Adrenal gland (tissue), 19 donors: ENCODE measurements at regions of chr17 and their contacts with region 1.

Region 1: GRCh38 chr17:59440784-59441441 is 109.5 kb downstream of the YPEL2 start:
- DNase-seq: peak; percentile 89 to 98 (median 93)
- H3K4me3 ChIP-seq: peak overlapping the region in 1 of 4 donors; percentile 3
- H3K27ac ChIP-seq: peak overlapping the region in 2 of 5 donors; percentile 24 to 60
- H3K4me1 ChIP-seq: peaks cover 6 to 7% of the 10 kb centered on the region in 2 donors
- H3K27me3 ChIP-seq: no peaks in the 10 kb centered on the region
- CTCF ChIP-seq: peak; percentile 65 to 93 (median 90)
- POLR2A ChIP-seq: no peak

Region 2: GRCh38 chr17:59558977-59559376 is 118.1 kb after region 1 on chr17:
- intact Hi-C with region 1: loop called in 1 of 2 experiments (anchors 5 kb)
- DNase-seq: no peak
- H3K4me3 ChIP-seq: no peak overlapping the region
- H3K27ac ChIP-seq: no peak overlapping the region
- H3K4me1 ChIP-seq: no peaks in the 10 kb centered on the region
- H3K27me3 ChIP-seq: no peaks in the 10 kb centered on the region
- CTCF ChIP-seq: peak in 5 of 6 experiments; percentile 18 to 59 (median 49)
- POLR2A ChIP-seq: no peak